CD14-positive monocyte (primary cell): ENCODE measurements at regions of chr3 and their contacts with region 1.

Region 1: DNA sequence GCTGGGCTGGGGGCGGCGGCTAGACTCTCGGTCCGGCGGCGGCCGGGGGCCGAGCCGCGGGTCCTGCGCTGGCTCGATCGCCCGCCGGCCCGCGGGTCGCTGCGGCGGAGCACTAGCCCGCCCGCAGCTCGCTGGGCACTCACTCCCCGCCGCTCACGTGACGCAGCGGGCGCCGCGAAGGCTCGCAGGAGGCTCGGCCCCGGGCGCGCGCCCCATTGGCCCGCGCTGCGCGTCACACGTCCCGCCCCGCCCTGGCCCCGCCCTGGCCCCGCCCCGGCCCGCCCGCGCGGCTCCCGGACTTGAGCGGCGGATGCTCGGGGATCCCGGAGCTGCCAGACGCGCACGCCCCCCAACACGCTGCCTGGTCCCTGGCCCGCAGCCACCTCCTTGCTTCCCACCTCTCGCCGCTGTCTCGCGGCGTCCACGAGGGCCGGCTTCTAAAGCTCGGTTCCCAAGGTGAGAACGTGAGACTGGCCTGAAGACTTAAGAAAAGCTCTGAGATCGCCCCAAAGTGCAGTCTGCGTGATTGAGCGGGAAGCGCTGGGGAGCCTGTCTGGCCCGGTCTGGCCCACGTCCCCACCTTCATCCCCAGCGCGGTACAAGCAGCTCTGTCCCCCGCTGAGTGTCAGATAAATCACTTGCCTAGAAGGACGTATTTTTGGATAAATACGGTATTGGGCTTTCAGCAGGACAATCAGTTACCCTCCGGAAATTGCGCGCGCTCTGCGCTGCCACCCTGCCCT is at the start of gene KLF15:
- DNase-seq: peak; percentile 76 to 85 (median 77)
- H3K4me3 ChIP-seq: peak within 1 kb of the TSS; percentile 34 to 73 (median 37)
- H3K4me3 Mint-ChIP-seq: peak within 1 kb of the TSS; percentile 82 to 94
- H3K27ac ChIP-seq: no peak within 1 kb of the TSS
- H3K27ac Mint-ChIP-seq: peak within 1 kb of the TSS in 4 of 7 donors; percentile 58 to 70 (median 66)
- H3K4me1 ChIP-seq: peaks cover 18 to 24% of the 10 kb centered on the region in 2 donors
- H3K4me1 Mint-ChIP-seq: peaks cover 18% of the 10 kb centered on the region
- H3K27me3 ChIP-seq: peaks cover 32 to 75% of the 10 kb centered on the region in 2 donors
- H3K27me3 Mint-ChIP-seq: peaks cover 59 to 78% (median 64%) of the 10 kb centered on the region in 3 donors
- CTCF ChIP-seq: no peak
- polyA plus RNA-seq, gene KLF15: not detected

Region 2: GRCh38 chr3:126267226-126267975 is 90.1 kb before region 1 on chr3:
- intact Hi-C with region 1: no loop called
- DNase-seq: peak; percentile 24 to 35 (median 29)
- H3K4me3 ChIP-seq: peak overlapping the region; percentile 4 to 72 (median 26)
- H3K4me3 Mint-ChIP-seq: peak overlapping the region; percentile 79 to 89
- H3K27ac ChIP-seq: no peak overlapping the region
- H3K27ac Mint-ChIP-seq: no peak overlapping the region
- H3K4me1 ChIP-seq: peaks cover 12 to 24% of the 10 kb centered on the region in 2 donors
- H3K4me1 Mint-ChIP-seq: peaks cover 19% of the 10 kb centered on the region
- H3K27me3 ChIP-seq: peaks cover 0 to 39% of the 10 kb centered on the region in 2 donors
- H3K27me3 Mint-ChIP-seq: peaks cover 29 to 52% (median 46%) of the 10 kb centered on the region in 3 donors
- CTCF ChIP-seq: no peak

Region 3: DNA sequence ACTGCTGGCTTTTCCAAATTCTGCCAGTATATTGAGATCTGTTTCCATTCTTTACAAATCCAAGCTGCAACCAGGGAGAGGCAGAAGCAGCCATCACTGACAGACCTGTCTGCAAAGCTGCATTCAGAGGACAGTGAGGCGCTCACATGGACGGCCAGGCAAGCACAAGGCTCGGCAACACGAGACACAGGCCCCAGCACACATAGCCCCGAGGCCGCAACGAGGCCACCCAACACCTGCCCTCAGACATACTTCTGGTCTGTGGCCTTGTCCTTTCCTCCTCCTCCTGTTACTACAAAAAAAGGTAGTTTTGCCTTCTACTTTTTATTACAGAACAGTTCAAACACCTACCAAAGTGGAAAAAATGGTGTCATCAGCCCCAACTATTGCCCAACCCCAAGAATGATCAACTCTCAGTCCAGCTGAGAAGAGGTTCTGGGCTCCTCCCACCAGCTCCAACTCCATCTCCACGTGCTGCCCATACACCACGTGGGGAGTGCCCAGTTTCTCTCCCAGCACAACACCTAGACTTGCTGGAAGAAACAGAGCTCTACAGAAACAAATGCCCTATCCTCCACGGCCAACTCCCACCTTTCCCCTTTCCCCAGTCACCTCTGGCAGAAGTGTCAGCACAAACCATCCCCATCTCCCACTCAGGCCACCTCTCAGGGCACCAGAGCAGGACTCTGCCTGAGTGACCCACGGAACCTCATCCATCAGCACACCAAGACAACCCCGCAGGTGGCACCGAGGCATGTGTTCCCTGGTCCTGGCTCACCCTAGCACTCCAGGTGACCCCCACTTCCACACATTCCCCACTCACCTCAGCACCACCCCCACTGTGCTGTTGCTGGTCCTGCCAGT is 110.8 kb after region 1 on chr3:
- intact Hi-C with region 1: loop called (anchors 10 kb)
- DNase-seq: peak; percentile 36 to 49 (median 46)
- H3K4me3 ChIP-seq: no peak overlapping the region
- H3K4me3 Mint-ChIP-seq: no peak overlapping the region
- H3K27ac ChIP-seq: peak overlapping the region; percentile 8 to 76
- H3K27ac Mint-ChIP-seq: peak overlapping the region; percentile 74 to 92 (median 80)
- H3K4me1 ChIP-seq: peaks cover 65 to 73% of the 10 kb centered on the region in 2 donors
- H3K4me1 Mint-ChIP-seq: peaks cover 69% of the 10 kb centered on the region
- H3K27me3 ChIP-seq: no peaks in the 10 kb centered on the region
- H3K27me3 Mint-ChIP-seq: no peaks in the 10 kb centered on the region
- CTCF ChIP-seq: no peak

Region 4: DNA sequence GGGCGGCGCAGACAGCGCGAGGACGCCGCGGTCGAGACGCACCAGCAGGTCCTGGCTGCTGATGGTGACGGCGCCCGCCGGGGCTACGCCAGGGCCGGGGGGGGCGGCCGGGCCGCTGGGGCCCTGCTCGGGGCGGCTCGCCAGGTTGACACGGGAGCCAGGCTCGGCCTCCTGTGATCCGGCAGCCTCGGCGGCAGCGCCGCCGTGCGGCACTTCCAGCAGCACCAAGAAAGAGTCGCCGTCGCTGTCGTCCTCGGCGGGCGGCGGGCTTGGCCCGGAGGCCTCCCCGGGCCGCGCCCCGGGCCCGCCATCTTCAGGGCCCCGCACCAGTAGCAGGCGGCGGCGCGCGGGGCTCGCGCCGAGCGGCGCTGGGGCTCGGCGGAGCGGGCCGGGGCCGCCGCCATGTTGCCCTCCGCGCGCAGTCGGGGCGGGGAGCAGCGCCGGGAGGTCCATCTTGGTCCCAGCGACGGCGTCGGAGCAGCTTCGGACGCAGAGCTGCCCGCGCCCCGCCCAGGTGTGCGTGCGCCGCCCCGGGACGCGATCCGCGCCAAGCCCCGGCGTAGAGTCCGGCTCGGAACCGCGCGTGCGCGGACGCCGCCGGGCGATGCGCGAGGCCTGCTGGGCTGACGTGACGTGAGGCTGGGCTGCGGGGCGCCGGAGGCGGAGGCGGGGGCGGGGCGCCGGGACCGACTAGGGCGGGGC is 118.1 kb after region 1 on chr3 and contains the start of gene ZXDC:
- intact Hi-C with region 1: loop called in 1 of 2 experiments (anchors 10 kb)
- DNase-seq: peak; percentile 92 to 94 (median 92)
- H3K4me3 ChIP-seq: peak within 1 kb of the TSS; percentile 57 to 84 (median 63)
- H3K4me3 Mint-ChIP-seq: peak within 1 kb of the TSS; percentile 88 to 92
- H3K27ac ChIP-seq: peak within 1 kb of the TSS; percentile 89 to 95
- H3K27ac Mint-ChIP-seq: peak within 1 kb of the TSS; percentile 87 to 98 (median 95)
- H3K4me1 ChIP-seq: peaks cover 41 to 47% of the 10 kb centered on the region in 2 donors
- H3K4me1 Mint-ChIP-seq: peaks cover 37% of the 10 kb centered on the region
- H3K27me3 ChIP-seq: no peaks in the 10 kb centered on the region
- H3K27me3 Mint-ChIP-seq: no peaks in the 10 kb centered on the region
- CTCF ChIP-seq: no peak
- polyA plus RNA-seq, gene ZXDC: 6.3 to 44.8 (median 9.7) TPM